Naive thymus-derived CD4-positive, alpha-beta T cell (primary cell): ENCODE measurements at regions of chr9 and their contacts with region 1.

Region 1: DNA sequence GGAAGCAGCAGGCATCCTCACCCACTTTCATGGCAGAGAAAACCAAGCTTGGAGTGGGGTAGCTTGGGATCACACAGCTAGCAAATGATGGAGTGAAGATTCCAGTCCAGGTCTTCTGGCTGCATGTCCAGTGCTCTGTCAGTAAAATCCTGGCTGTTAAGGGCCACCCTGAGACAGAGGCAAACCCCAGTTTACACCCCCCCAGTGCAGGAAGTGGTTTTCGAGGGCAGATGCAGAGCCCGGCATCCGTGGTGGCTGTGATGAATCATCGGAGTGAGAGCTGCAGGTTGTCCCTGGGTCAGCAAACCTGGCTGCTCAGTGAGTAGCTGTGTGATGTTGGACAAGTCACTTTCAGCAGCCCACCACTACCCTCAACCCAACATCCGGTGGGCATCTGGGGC is 115.4 kb downstream of the RGS3 start:
- DNase-seq: peak; percentile 39 to 86 (median 66)
- ATAC-seq: peak; percentile 75
- H3K4me3 ChIP-seq: peak overlapping the region; percentile 37
- H3K4me3 Mint-ChIP-seq: peak overlapping the region; percentile 70 to 95 (median 82)
- H3K27ac ChIP-seq: peak overlapping the region; percentile 77
- H3K27ac Mint-ChIP-seq: peak overlapping the region; percentile 92 to 98 (median 96)
- H3K4me1 ChIP-seq: peaks cover 49 to 50% of the 10 kb centered on the region in 2 donors
- H3K4me1 Mint-ChIP-seq: peaks cover 53 to 85% (median 75%) of the 10 kb centered on the region in 7 donors
- H3K27me3 ChIP-seq: no peaks in the 10 kb centered on the region
- H3K27me3 Mint-ChIP-seq: no peaks in the 10 kb centered on the region

Region 2: DNA sequence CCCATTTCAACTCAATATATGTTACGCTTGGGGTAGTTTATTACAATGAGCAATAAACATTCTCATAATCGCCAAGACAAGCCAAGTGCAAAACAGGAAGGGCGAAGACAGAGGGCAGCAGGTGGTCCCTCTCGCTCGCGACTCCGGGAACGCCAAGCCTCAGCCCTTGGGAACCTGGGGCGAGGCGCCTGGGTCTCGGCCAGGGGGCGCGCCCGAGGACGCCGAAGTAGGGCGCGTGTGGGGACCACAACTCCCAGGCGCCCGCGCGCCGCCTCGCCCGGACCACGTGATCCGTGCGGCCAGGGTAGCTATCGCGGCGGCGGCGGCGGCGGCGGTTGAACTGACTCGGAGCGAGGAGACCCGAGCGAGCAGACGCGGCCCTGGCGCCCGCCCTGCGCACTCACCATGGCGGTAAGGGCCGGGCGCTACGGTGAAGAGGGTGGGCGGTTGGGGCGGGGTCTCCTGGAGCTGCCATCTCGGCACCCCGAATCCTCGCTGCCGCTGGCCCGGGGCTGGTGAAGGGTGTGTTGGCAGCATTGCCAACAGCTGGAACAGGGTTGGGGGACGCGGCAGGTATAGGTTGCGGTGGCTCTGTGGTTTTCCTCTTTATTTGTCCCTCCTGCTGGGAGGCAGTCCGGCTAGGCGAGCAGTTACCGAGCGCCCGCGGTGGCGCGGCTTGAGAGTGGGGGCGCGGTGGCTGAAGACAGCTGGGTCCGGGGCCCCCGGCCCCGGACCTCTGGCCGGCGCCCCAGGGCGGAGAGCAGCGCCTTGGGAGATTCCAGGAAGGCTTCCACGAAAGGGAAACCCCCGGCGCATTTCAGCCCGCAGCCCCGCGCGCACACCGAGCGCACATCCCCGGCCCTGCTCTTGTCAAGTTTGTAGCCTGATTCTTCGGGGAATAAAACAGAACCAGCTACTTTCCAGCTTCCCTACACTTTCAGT is 427.9 kb before region 1 on chr9 and contains the start of gene SLC31A2:
- CTCF ChIA-PET with region 1: no interaction called
- POLR2A ChIA-PET with region 1: no interaction called
- intact Hi-C with region 1: loop called (anchors 2 to 10 kb)
- DNase-seq: peak; percentile 73 to 93 (median 80)
- ATAC-seq: peak; percentile 92
- H3K4me3 ChIP-seq: peak within 1 kb of the TSS; percentile 78
- H3K4me3 Mint-ChIP-seq: peak within 1 kb of the TSS; percentile 58 to 88 (median 84)
- H3K27ac ChIP-seq: peak within 1 kb of the TSS; percentile 73
- H3K27ac Mint-ChIP-seq: peak within 1 kb of the TSS; percentile 38 to 76 (median 68)
- H3K4me1 ChIP-seq: peaks cover 10 to 15% of the 10 kb centered on the region in 2 donors
- H3K4me1 Mint-ChIP-seq: peaks cover 16 to 42% (median 36%) of the 10 kb centered on the region in 7 donors
- H3K27me3 ChIP-seq: no peaks in the 10 kb centered on the region
- H3K27me3 Mint-ChIP-seq: peaks cover 1 to 6% (median 4%) of the 10 kb centered on the region in 5 donors
- total RNA-seq, gene SLC31A2: 5.3 to 39.2 (median 5.4) TPM

Region 3: GRCh38 chr9:113309204-113309813 is 269.6 kb before region 1 on chr9:
- CTCF ChIA-PET with region 1: interaction called, 3 read pairs
- POLR2A ChIA-PET with region 1: no interaction called
- intact Hi-C with region 1: loop called in 1 of 2 experiments (anchors 5 kb)
- DNase-seq: peak in 5 of 9 donors; percentile 19 to 45 (median 33)
- ATAC-seq: peak; percentile 57
- H3K4me3 ChIP-seq: no peak overlapping the region
- H3K4me3 Mint-ChIP-seq: no peak overlapping the region
- H3K27ac ChIP-seq: no peak overlapping the region
- H3K27ac Mint-ChIP-seq: no peak overlapping the region
- H3K4me1 ChIP-seq: no peaks in the 10 kb centered on the region
- H3K4me1 Mint-ChIP-seq: no peaks in the 10 kb centered on the region
- H3K27me3 ChIP-seq: no peaks in the 10 kb centered on the region
- H3K27me3 Mint-ChIP-seq: peaks cover 0 to 7% (median 0%) of the 10 kb centered on the region in 5 donors

Region 4: DNA sequence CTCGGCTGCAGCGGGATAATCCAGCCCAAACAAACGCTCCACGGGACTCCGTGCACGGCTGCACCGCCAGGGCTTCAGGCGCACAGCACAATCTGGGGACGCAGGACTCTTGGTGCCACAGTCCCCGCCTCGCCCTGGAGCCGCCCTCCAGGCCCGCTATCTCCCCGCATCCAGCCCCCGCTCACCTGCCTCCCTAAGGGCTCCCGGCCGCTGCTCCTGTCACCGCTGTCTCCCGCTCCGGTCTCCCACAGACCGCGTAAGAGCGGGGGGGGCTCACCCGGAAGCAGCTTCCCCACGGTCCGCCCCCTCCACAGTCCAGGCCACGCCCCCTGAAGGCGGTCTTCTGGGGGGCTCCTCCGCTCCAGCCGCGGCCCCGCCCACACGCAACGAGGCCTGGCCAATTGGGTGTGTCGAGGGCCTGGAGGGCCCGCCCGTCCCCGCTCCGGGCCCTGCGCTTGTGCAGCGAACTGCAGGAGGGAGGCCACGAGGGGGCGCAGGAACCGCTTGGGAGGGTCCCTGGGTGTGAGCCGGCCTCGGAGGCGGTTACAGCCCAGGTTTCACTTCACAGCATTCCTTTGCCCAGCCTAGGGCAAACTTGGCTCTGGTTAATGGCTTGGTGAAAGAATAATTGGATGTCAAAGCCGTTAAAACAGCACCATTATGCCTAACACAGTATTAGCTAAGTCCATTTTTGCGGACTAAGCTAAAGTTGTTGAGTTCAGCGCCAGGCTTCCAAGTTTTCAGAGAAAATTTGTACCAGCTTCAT is 177.7 kb before region 1 on chr9 and contains the start of gene ALAD:
- CTCF ChIA-PET with region 1: interaction called, 5 read pairs
- POLR2A ChIA-PET with region 1: interaction called, 8 read pairs
- intact Hi-C with region 1: loop called (anchors 1 kb)
- DNase-seq: peak; percentile 99 to 100 (median 99)
- ATAC-seq: peak; percentile 99
- H3K4me3 ChIP-seq: peak within 1 kb of the TSS; percentile 82
- H3K4me3 Mint-ChIP-seq: peak within 1 kb of the TSS; percentile 89 to 96 (median 95)
- H3K27ac ChIP-seq: peak within 1 kb of the TSS; percentile 74
- H3K27ac Mint-ChIP-seq: peak within 1 kb of the TSS; percentile 81 to 91 (median 87)
- H3K4me1 ChIP-seq: peaks cover 12 to 13% of the 10 kb centered on the region in 2 donors
- H3K4me1 Mint-ChIP-seq: peaks cover 18 to 37% (median 25%) of the 10 kb centered on the region in 7 donors
- H3K27me3 ChIP-seq: no peaks in the 10 kb centered on the region
- H3K27me3 Mint-ChIP-seq: no peaks in the 10 kb centered on the region
- total RNA-seq, gene ALAD: 25.1 to 45.5 (median 39.1) TPM

Region 5: GRCh38 chr9:113511856-113512761 is 66.8 kb before region 1 on chr9:
- CTCF ChIA-PET with region 1: interaction called, 13 read pairs
- POLR2A ChIA-PET with region 1: interaction called, 21 read pairs
- intact Hi-C with region 1: loop called (anchors 1 kb)
- DNase-seq: peak; percentile 17 to 82 (median 40)
- ATAC-seq: peak; percentile 74
- H3K4me3 ChIP-seq: peak overlapping the region; percentile 42
- H3K4me3 Mint-ChIP-seq: peak overlapping the region; percentile 72 to 88 (median 84)
- H3K27ac ChIP-seq: peak overlapping the region; percentile 64
- H3K27ac Mint-ChIP-seq: peak overlapping the region; percentile 85 to 97 (median 94)
- H3K4me1 ChIP-seq: peaks cover 43 to 57% of the 10 kb centered on the region in 2 donors
- H3K4me1 Mint-ChIP-seq: peaks cover 41 to 69% (median 60%) of the 10 kb centered on the region in 7 donors
- H3K27me3 ChIP-seq: no peaks in the 10 kb centered on the region
- H3K27me3 Mint-ChIP-seq: no peaks in the 10 kb centered on the region

Region 6: DNA sequence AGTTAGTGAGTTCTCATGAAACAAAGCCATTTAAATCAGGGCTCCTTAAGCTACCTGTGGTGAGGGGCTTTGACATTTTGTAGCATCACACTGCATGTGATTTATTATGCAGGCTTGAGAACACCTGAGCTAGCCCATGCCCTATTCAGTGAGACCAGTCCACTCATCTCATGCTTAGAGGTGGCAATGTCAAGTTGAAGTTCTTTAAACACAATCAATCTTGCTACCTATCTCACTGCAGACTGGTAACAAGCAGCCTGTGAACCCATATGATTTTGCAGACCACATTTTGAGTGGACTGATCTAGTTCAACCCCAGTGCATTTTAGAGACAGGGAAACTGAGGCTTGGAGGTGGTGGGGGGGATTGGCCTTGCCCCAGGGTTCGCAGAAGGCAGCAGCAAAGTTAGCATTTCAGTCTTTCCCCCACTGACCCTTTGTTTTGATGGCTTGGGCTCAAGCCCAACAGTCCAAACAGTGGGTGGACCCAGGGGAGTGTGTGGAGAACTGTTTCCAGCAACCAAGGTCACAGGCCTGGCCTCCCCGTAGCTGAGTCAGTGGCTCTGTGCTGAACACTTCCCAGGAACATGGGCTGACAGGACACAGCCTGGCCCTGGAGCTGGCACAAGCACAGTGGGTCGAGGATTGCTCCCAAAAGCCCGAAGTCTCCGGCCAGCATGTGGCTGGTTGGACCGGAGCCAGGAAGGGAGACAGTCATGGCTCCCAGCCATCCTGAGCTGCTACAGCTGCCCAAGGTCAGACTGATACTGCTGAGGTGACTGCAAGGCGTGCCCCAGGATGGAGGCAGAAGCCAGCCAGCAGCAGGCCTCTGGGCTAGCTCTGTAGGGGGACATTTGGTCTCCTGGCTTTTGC is 20.0 kb before region 1 on chr9:
- CTCF ChIA-PET with region 1: interaction called, 4 read pairs
- POLR2A ChIA-PET with region 1: interaction called, 3 read pairs
- intact Hi-C with region 1: loop called in 1 of 2 experiments (anchors 1 kb)
- DNase-seq: no peak
- ATAC-seq: no peak
- H3K4me3 ChIP-seq: no peak overlapping the region
- H3K4me3 Mint-ChIP-seq: no peak overlapping the region
- H3K27ac ChIP-seq: no peak overlapping the region
- H3K27ac Mint-ChIP-seq: peak overlapping the region in 1 of 9 donors; percentile 51
- H3K4me1 ChIP-seq: peaks cover 6 to 9% of the 10 kb centered on the region in 2 donors
- H3K4me1 Mint-ChIP-seq: peaks cover 5 to 40% (median 22%) of the 10 kb centered on the region in 7 donors
- H3K27me3 ChIP-seq: no peaks in the 10 kb centered on the region
- H3K27me3 Mint-ChIP-seq: no peaks in the 10 kb centered on the region

Region 7: DNA sequence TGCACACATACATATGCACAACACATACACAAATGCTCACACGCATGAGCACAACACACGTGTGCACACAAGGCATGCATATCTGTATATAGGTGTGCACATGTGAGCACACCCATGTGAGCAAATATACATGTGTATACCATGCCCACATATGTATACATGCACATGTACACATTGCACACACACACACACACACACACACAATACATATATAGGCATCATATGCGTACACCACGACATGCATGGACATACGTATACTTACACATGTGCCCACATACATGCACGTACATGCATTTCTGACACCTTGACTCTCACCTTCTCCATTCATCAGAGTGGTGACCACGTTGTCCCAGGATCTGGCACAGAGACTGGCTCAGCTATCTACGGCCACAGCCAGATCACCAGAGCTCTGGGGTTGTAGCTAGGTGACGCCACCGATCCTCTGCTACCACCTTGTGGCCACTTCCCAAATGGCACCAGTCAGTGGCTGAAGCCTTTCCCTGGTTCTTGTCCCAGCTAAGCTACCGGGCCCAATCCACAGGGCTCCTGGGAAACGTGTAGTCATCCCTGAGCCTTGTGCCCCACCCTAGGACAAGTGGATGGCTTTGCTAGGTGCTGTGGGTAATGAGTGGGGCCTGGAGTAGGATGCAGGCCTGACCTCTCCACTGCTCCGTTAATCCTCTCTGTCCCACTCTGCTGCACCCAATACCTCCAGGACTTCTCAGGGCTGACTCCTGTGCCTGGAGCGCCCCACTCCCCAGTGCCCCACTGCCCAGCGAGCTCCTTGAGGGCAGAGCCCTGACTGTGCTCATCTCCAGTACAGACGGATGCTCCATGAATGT is 79.0 kb after region 1 on chr9:
- CTCF ChIA-PET with region 1: interaction called, 14 read pairs
- POLR2A ChIA-PET with region 1: no interaction called
- intact Hi-C with region 1: loop called in 1 of 2 experiments (anchors 1 kb)
- DNase-seq: peak; percentile 43 to 82 (median 66)
- ATAC-seq: peak; percentile 91
- H3K4me3 ChIP-seq: no peak overlapping the region
- H3K4me3 Mint-ChIP-seq: no peak overlapping the region
- H3K27ac ChIP-seq: no peak overlapping the region
- H3K27ac Mint-ChIP-seq: peak overlapping the region in 1 of 9 donors; percentile 47
- H3K4me1 ChIP-seq: no peaks in the 10 kb centered on the region
- H3K4me1 Mint-ChIP-seq: peaks cover 0 to 9% (median 2%) of the 10 kb centered on the region in 7 donors
- H3K27me3 ChIP-seq: no peaks in the 10 kb centered on the region
- H3K27me3 Mint-ChIP-seq: peaks cover 9 to 23% (median 21%) of the 10 kb centered on the region in 5 donors